Body of pancreas (tissue), 4 donors: ENCODE measurements at regions of chr1 and their contacts with region 1.

Region 1: GRCh38 chr1:155172732-155173477 is at the start of gene KRTCAP2:
- DNase-seq: peak; percentile 93 to 97 (median 95)
- ATAC-seq: peak; percentile 89
- H3K4me3 ChIP-seq: peak within 1 kb of the TSS; percentile 35 to 84
- H3K27ac ChIP-seq: peak within 1 kb of the TSS; percentile 67 to 85 (median 78)
- H3K4me1 ChIP-seq: peaks cover 20% of the 10 kb centered on the region
- H3K27me3 ChIP-seq: no peaks in the 10 kb centered on the region
- CTCF ChIP-seq: peak; percentile 83 to 100 (median 97)
- POLR2A ChIP-seq: peak in 2 of 3 donors; percentile 70 to 72
- total RNA-seq, gene KRTCAP2: 46.4 to 71.5 TPM

Region 2: DNA sequence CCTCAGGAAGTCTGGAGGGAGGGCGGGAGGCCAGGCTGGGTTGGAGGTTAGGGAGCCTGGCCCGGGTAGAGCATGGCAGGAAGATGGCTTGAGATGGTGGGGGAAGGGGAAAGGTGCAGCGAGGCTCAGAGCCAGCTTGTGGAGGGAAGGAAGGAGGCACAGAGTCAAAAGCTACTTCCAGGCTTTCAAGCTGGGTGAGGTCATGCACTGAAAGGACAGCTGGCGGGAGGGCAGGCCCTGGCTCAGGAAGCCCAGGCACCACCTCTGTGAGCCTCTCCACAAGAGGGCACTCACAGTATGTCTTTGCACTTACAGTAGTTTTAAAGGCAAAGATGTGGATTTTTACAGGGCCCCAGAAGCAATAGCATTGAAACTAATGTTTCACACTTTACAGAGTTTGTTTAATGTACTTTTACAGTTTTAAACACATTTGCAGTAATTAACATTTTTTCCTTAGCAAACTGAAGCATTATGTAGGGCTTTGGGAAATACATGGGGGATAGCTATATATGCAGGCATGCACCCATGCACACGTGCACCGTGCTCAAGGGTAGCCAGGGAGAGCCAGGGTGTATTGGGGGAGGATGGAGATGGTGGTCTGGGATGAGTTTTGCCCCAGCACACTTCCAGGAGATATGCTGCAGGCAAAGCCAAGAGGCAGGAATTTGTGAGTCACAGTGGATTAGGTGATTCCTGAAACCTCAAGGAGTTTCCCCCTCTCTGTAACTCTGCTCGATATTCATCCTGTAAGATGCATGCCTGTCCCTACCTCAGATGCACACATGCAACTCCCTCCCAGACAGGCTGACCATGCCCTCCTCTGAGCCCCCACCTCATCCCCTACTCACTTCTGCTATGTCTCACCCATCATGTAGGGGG is 127.9 kb before region 1 on chr1:
- intact Hi-C with region 1: no loop called
- DNase-seq: peak; percentile 91 to 96 (median 95)
- ATAC-seq: peak; percentile 99
- H3K4me3 ChIP-seq: no peak overlapping the region
- H3K27ac ChIP-seq: peak overlapping the region; percentile 49 to 77 (median 70)
- H3K4me1 ChIP-seq: peaks cover 12% of the 10 kb centered on the region
- H3K27me3 ChIP-seq: no peaks in the 10 kb centered on the region
- CTCF ChIP-seq: peak; percentile 73 to 97 (median 91)
- POLR2A ChIP-seq: no peak

Region 3: DNA sequence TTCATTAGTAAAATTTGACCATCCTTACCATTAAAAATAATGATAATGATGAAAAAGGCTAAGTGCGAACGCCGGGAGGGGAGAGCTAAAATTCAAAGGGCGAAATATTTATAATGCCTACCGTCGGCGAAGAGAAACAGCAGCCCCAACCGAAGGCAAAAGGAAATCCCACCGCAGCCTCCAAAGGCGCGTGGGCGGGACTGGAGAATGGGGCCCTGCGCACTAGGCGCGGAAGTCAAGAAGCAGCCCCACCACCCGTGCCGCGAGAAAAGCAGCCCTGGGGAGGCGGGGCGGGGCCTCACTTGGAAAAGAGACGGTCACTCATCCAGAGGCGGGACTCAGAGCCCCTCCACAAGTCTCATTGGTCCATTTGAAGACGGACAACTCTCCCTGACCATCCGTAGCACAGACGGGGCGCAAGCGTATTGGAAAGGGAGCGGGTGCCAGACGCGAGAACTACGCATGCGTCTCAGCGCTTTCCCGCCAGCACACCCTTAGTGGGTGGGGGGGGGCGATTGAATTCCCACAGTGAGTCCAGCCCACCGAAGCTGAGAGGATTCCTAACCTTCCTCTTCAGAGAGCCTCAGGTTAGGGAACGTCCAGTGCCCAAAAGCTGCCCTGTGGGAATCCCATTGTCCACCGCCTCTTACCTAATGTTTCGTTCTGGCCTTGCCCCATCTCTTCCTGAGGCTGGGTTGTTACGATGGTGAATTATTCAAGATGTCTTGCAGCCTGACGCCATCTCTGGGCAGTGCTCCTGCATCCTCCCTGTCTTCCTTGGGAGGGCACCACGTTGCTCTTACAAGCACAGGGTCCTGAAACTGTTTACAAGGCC is 54.6 kb after region 1 on chr1:
- intact Hi-C with region 1: loop called (anchors 10 kb)
- DNase-seq: peak; percentile 98 to 99 (median 98)
- ATAC-seq: peak; percentile 99
- H3K4me3 ChIP-seq: peak overlapping the region in 1 of 2 donors; percentile 65
- H3K27ac ChIP-seq: peak overlapping the region; percentile 50 to 88 (median 68)
- H3K4me1 ChIP-seq: peaks cover 26% of the 10 kb centered on the region
- H3K27me3 ChIP-seq: no peaks in the 10 kb centered on the region
- CTCF ChIP-seq: no peak
- POLR2A ChIP-seq: peak; percentile 24 to 79 (median 71)